Aorta (tissue), 5 donors: ENCODE measurements at regions of chr20 and their contacts with region 1.

Region 1: DNA sequence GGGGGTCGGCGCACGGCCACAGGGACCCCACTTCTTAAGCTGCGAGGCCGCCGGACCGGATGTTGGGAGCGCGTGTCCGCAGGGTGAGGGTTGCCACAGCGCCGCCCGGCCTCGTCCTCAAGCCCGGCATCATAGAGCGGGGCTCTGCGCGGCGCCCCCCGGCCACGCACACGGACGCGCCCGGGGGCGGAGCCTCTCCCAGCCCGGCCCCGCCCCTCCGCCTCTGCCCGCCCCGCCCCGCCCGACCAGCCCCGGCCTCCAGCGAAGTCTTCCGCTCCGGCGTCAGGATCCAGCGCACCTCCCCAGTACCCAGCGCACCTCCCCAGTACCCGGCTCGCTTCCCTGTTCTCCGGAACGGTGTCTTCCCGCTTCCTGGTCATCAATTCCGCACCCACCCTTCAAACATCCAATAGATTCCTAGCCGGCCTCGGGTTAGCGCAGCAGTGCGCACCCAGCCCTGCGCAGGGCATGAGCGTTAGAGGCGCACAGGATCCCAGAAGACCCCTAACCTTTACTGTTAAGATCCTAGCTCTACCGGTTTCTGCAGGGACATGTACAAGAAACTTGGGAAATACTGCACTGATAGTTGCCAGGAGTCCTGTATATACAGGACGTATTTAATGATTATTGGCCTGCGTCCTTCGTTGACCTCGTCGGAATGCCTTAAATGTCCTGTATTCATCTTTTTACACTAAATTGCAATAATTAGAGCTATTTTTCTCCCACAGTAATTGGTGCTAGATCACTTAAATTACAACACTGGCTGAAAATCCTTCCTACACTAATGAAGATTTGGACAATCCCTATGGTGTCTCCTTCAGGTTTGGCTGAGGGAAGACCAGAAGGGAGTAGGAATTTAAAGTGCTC is 535 bp upstream of the DNAAF9 start:
- DNase-seq: peak; percentile 85 to 91
- ATAC-seq: peak; percentile 87
- H3K4me3 ChIP-seq: peak overlapping the region; percentile 91 to 99
- H3K27ac ChIP-seq: peak overlapping the region; percentile 16 to 94
- H3K4me1 ChIP-seq: no peaks in the 10 kb centered on the region
- H3K27me3 ChIP-seq: no peaks in the 10 kb centered on the region

Region 2: DNA sequence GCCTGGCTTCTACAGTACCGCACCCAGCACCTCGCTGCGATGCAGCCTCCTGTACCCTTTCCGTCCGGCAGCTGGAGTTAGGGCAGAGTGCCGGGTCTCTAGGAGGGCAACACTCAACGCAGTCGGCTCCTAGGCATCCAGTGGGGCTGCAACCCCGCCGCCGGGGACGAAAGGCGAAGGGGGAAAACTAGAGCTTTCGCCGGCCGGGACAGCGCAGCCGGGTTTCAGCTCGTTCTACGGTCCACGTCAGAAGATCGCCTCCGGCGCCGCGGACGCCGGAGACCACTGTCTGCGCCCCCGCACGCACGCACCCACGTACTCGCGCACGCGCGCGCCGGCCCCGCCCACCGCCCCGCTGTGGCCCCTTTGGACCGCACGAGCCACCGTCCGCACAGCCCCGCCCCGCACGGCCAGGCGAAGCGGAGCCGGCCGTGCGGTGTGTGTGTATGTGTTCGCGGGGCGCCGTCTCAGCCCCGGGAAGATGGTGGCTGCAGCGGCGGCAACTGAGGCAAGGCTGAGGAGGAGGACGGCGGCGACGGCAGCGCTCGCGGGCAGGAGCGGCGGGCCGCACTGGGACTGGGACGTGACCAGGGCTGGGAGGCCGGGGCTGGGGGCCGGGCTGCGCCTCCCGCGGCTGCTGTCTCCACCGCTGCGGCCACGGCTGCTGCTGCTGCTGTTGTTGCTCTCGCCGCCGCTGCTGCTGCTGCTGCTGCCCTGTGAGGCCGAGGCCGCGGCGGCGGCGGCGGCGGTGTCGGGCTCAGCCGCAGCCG is 62.8 kb after region 1 on chr20 and contains the start of gene ATRN:
- intact Hi-C with region 1: loop called (anchors 5 kb)
- DNase-seq: peak; percentile 95 to 98
- ATAC-seq: peak; percentile 98
- H3K4me3 ChIP-seq: peak within 1 kb of the TSS; percentile 66 to 67
- H3K27ac ChIP-seq: peak within 1 kb of the TSS in 1 of 2 donors; percentile 46
- H3K4me1 ChIP-seq: peaks cover 0 to 7% of the 10 kb centered on the region in 2 donors
- H3K27me3 ChIP-seq: no peaks in the 10 kb centered on the region
- total RNA-seq, gene ATRN: 25.7 to 33.4 TPM